Common myeloid progenitor, CD34-positive (primary cell): ENCODE measurements at regions of chr13 and their contacts with region 1.

Region 1: DNA sequence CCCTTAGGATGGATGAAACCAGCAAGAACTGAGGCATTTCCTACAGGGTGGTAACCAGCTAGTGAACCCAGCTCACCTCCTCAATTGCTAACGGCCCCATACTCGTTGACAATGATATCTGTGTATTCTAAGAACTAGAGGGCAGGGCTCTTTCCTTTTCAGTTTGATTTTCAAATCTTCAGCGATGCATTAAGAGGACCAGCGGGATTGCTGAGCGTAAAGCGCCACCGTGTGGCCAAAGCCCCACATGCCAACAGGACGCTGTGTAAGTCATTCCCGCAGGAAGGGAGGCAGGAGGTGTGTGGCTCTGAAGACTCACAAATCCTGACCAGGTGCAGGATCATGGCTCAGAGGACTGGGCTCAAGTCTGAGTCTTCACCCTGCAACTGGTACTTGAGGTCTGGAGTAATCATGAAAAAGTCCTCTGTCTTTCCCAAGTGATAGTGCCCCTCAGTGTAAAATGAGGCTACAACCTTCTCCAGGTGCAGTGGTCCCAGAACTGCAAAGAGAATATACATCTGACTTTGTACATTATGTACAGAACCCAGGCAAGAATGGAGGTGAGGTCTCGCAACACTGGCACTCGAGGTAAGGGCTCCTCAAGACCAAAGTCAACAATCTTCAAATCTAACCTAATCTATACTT is 40.9 kb downstream of the C13orf42 start:
- DNase-seq: peak; percentile 79 to 86 (median 80)
- H3K4me3 ChIP-seq: no peak overlapping the region
- H3K27ac ChIP-seq: no peak overlapping the region
- H3K4me1 ChIP-seq: peaks cover 8 to 53% (median 37%) of the 10 kb centered on the region in 4 experiments
- H3K27me3 ChIP-seq: no peaks in the 10 kb centered on the region

Region 2: DNA sequence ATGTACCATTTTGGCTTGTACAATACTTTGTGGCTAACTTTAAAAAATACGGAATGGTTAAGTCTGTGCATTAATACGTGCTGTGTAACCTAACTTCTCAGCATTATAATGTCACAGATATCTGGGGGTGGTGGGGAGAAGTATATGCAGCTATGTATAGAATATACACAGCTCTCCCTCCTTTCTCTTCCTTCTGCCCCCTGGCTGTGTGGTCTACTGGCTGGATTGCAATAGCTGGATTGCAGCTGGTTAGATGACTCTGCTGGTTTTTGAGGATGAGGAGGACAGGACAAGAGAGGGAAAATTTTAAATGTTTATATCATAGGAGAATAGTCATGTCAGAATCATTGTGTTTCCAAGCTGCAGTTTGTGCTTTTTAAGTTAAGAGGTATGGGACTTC is 150.8 kb before region 1 on chr13:
- CTCF ChIA-PET with region 1: interaction called, 14 read pairs
- POLR2A ChIA-PET with region 1: no interaction called
- DNase-seq: peak in 1 of 3 donors; percentile 43
- H3K4me3 ChIP-seq: no peak overlapping the region
- H3K27ac ChIP-seq: peak overlapping the region in 1 of 2 experiments; percentile 31
- H3K4me1 ChIP-seq: peaks cover 27 to 50% (median 43%) of the 10 kb centered on the region in 4 experiments
- H3K27me3 ChIP-seq: no peaks in the 10 kb centered on the region

Region 3: DNA sequence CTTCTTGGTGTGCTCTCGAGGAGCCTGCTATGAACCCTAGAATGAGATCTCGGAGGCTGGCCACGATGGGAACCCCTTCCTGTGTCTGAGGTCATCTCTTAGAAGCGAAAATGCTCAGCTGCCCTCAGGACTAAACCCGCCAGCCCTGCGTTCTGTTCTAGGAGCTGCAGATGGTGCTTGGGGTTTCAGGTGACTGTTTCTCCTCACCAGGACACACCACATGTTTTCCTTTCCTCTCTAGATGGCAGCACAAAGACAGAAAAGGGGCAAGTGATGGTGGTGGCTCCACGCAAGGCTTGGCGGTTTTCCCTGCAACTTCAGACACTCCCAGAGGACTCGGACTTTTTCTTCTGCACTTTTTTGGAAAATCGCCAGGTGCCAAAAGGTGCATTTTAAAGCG is 100.4 kb before region 1 on chr13:
- CTCF ChIA-PET with region 1: interaction called, 12 read pairs
- POLR2A ChIA-PET with region 1: no interaction called
- DNase-seq: peak; percentile 22 to 29 (median 25)
- H3K4me3 ChIP-seq: no peak overlapping the region
- H3K27ac ChIP-seq: no peak overlapping the region
- H3K4me1 ChIP-seq: no peaks in the 10 kb centered on the region
- H3K27me3 ChIP-seq: no peaks in the 10 kb centered on the region

Region 4: DNA sequence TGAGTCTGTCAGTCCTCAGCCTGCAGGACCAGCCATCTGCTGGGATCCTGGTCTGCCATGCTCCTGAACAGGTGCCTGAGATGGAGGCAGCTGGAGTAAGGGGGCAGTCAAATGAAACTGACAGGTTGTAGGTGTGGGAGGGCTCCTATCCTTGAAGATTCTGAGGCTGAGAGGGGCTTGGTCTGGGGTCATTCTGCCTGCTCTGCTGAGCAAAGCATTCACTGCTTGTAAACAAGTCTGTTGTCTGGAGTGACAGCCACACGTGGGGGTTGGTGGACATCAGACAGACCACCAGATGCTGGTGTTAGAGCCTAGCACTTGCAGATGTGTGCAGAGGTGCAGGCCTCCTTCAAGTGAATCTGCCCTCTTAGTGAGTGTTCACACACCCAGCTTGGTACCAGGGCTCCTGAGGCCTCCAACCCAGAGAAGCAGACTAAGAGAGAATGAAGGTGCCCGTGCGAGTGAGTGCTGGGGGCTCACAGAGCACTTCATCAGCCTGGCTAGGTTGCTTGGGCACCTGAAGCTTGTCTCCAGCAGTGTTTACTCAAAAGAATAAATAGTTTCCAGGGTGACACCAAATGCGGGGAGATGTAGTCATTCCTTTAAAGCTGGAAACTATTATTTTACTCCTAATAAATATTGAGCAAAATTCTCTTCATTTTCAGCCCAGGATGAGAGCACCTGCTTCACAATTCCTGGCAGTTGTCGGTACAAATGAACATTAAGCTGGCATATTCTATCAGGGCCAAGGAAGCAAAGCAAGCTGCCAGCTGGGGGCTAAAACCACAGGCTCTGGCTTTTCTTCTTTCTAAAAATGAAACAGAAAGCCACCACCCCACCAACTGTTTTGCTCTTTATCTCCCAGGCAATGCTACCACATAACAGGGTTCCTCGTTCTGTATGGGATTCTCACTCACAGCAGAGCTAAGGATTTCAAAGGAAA is 78.3 kb before region 1 on chr13:
- CTCF ChIA-PET with region 1: interaction called, 93 read pairs
- POLR2A ChIA-PET with region 1: interaction called, 3 read pairs
- DNase-seq: peak; percentile 69 to 94 (median 92)
- H3K4me3 ChIP-seq: peak overlapping the region in 3 of 7 experiments; percentile 20 to 58 (median 50)
- H3K27ac ChIP-seq: peak overlapping the region; percentile 64 to 88
- H3K4me1 ChIP-seq: peaks cover 6 to 50% (median 43%) of the 10 kb centered on the region in 4 experiments
- H3K27me3 ChIP-seq: no peaks in the 10 kb centered on the region

Region 5: GRCh38 chr13:51052581-51052980 is 17.5 kb before region 1 on chr13:
- CTCF ChIA-PET with region 1: interaction called, 13 read pairs
- POLR2A ChIA-PET with region 1: no interaction called
- DNase-seq: no peak
- H3K4me3 ChIP-seq: no peak overlapping the region
- H3K27ac ChIP-seq: no peak overlapping the region
- H3K4me1 ChIP-seq: peaks cover 2 to 28% (median 18%) of the 10 kb centered on the region in 4 experiments
- H3K27me3 ChIP-seq: no peaks in the 10 kb centered on the region

Region 6: GRCh38 chr13:51134763-51135365 is 64.7 kb after region 1 on chr13:
- CTCF ChIA-PET with region 1: no interaction called
- POLR2A ChIA-PET with region 1: no interaction called
- DNase-seq: no peak
- H3K4me3 ChIP-seq: no peak overlapping the region
- H3K27ac ChIP-seq: no peak overlapping the region
- H3K4me1 ChIP-seq: peaks cover 0 to 1% (median 0%) of the 10 kb centered on the region in 4 experiments
- H3K27me3 ChIP-seq: no peaks in the 10 kb centered on the region

Region 7: DNA sequence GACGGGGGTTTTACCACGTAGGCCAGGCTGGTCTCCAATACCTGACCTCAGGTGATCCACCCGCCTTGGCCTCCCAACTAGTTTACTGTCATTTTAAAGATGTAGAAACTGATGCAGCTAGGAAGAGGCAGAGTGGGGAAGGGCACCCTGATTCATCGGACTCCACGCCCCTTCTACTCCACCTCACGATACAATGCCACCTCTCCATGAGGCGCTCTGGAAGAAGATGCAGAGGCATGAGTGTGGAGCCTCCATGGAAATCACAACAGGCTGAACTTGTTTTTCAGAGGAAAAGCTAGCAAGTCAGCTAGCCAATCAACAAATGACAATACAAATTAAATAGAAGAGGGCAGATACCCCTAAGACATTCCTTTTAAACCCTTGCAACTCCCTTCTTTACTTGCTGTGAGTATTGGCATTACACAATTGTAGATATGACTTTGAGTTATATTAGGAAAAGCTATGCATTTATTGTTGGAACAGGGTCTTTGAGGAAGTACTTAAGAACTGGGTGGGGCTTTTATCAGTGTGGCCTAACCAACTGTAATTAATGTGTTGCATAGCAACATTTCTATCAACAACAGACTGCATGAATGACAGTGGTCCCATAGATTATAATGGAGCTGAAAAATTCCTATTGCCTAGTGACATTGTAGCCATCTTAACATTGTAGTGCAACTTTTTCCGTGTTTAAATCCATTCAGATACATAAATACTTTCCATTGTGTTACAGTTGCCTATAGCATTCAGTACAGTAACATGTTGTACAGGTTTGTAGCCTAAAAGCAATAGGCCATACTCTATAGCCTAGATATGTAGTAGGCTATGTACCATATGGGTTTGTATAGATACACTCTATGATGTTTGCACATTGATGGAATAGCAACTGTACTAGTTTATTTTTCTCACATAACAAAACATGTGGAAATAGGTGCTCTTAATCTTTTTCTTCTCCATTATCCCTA is 531.8 kb after region 1 on chr13:
- CTCF ChIA-PET with region 1: no interaction called
- POLR2A ChIA-PET with region 1: no interaction called
- DNase-seq: peak; percentile 79 to 92 (median 87)
- H3K4me3 ChIP-seq: no peak overlapping the region
- H3K27ac ChIP-seq: peak overlapping the region; percentile 79 to 86
- H3K4me1 ChIP-seq: peaks cover 17 to 32% (median 23%) of the 10 kb centered on the region in 4 experiments
- H3K27me3 ChIP-seq: no peaks in the 10 kb centered on the region